ENCODE measurements at regions of chr4 and their contacts with region 1.

Region 1: GRCh38 chr4:57163530-57164459 is 53.6 kb upstream of the IGFBP7 start:
- DNase-seq: peak; percentile 95
- H3K4me3 ChIP-seq: peak overlapping the region; percentile 19 to 58 (median 49)
- H3K27ac ChIP-seq: peak overlapping the region; percentile 22
- H3K4me1 ChIP-seq: no peaks in the 10 kb centered on the region
- H3K27me3 ChIP-seq: peaks cover 15 to 20% of the 10 kb centered on the region in 2 experiments
- CTCF ChIP-seq: peak; percentile 77 to 98
- POLR2A ChIP-seq: no peak

Region 2: GRCh38 chr4:57043347-57044251 is 120.2 kb before region 1 on chr4:
- CTCF ChIA-PET with region 1: interaction called, 67 read pairs
- POLR2A ChIA-PET with region 1: no interaction called
- dilution Hi-C with region 1: no loop called
- intact Hi-C with region 1: loop called (anchors 1 kb)
- DNase-seq: peak; percentile 82
- H3K4me3 ChIP-seq: no peak overlapping the region
- H3K27ac ChIP-seq: no peak overlapping the region
- H3K4me1 ChIP-seq: peaks cover 25% of the 10 kb centered on the region
- H3K27me3 ChIP-seq: no peaks in the 10 kb centered on the region
- CTCF ChIP-seq: no peak
- POLR2A ChIP-seq: no peak

Region 3: DNA sequence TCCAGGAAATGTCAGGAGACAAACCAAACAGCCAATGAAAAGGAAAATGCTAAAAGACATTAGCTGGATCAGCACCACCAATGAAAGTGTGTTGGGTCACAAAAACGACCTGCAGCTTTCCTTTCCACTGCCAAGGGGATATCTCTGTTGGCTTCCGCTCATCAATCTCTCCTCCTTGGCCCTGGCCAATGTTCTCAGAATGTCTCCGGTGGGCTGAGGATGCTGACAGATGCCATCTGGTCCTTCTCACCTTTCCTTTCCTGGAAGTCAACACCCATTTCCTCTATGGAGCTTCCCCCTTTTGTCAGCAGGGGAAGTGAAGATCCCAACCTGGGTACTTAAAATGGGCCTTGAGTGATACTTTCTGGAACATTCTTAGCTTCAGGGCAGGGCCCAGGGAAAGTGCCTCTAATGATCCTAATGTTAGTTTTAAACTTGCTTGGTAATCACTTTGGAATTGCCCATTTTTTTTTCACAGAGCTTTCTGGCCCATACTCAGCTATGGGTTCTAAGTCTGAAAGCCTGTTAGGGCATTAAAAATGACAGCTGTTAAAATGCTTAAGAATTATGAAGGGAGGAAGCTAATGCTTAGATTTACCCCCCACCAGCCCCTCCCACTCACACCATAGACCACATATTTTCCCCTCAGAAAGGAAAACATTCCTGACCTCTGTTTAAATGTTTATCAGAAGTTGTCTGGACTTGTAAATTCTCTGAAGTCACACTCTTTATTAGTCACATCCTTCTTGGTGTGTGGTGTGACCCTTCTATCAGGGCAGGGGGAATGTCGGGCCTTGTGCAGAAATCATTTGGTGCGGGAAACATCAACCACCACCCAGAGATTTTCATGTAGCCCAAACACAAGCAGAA is 82.8 kb before region 1 on chr4:
- CTCF ChIA-PET with region 1: interaction called, 18 read pairs
- POLR2A ChIA-PET with region 1: no interaction called
- dilution Hi-C with region 1: no loop called
- intact Hi-C with region 1: loop called (anchors 1 kb)
- DNase-seq: peak; percentile 99
- H3K4me3 ChIP-seq: no peak overlapping the region
- H3K27ac ChIP-seq: peak overlapping the region; percentile 100
- H3K4me1 ChIP-seq: peaks cover 81% of the 10 kb centered on the region
- H3K27me3 ChIP-seq: no peaks in the 10 kb centered on the region
- CTCF ChIP-seq: no peak
- POLR2A ChIP-seq: peak; percentile 25

Region 4: DNA sequence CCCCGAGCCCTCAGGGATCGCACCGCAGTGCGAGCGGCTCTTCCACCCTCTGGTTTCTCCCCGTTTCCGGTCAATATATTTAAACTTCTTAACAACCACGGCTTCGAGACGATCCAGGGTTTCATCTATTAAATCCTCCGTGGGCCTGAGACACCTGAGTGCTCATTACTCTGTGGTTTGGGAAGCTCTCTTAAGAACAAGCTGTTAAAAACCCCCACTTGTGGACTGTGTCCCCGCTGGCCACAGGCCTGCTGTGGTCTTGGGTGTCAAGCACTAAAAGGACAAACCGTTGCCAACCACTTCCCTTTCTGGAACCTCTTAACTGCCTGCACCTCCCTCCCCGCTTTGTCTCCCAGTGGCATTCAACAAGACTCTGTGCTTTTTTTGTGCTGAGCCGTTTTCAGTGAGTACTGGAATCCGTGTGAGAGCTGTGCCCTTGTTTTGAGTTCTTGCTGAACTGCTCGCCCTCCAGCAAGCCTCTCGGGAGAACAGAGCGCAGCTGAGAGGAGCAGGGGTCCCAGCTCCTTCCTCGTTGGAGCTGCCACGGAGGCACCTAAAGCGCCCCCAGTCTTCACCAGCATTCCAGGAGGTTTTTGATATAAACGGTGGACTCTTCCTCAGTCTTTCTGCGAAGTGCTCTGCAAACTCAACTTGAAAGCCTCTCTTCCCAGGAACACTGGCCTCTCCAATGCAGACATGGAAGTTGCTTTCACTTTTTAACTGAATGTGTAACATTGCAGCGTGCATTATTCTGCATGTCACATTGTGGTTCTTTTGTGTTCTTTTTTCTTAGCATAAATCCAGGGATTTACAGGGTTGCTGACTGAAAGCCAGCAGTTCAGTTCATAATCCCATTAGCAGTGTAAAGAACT is 52.9 kb before region 1 on chr4:
- CTCF ChIA-PET with region 1: interaction called, 12 read pairs
- POLR2A ChIA-PET with region 1: no interaction called
- dilution Hi-C with region 1: no loop called
- intact Hi-C with region 1: loop called (anchors 1 kb)
- DNase-seq: peak; percentile 82
- H3K4me3 ChIP-seq: peak overlapping the region; percentile 20 to 85 (median 52)
- H3K27ac ChIP-seq: peak overlapping the region; percentile 54
- H3K4me1 ChIP-seq: peaks cover 21% of the 10 kb centered on the region
- H3K27me3 ChIP-seq: no peaks in the 10 kb centered on the region
- CTCF ChIP-seq: no peak
- POLR2A ChIP-seq: no peak

Region 5: GRCh38 chr4:57147335-57148060 is 16.3 kb before region 1 on chr4:
- CTCF ChIA-PET with region 1: interaction called, 31 read pairs
- POLR2A ChIA-PET with region 1: no interaction called
- dilution Hi-C with region 1: no loop called
- intact Hi-C with region 1: no loop called
- DNase-seq: peak; percentile 22
- H3K4me3 ChIP-seq: no peak overlapping the region
- H3K27ac ChIP-seq: no peak overlapping the region
- H3K4me1 ChIP-seq: no peaks in the 10 kb centered on the region
- H3K27me3 ChIP-seq: no peaks in the 10 kb centered on the region
- CTCF ChIP-seq: no peak
- POLR2A ChIP-seq: no peak

Region 6: GRCh38 chr4:57426779-57427395 is 263.1 kb after region 1 on chr4:
- CTCF ChIA-PET with region 1: interaction called, 9 read pairs
- POLR2A ChIA-PET with region 1: no interaction called
- dilution Hi-C with region 1: no loop called
- intact Hi-C with region 1: loop called (anchors 2 kb)
- DNase-seq: peak; percentile 60
- H3K4me3 ChIP-seq: no peak overlapping the region
- H3K27ac ChIP-seq: no peak overlapping the region
- H3K4me1 ChIP-seq: no peaks in the 10 kb centered on the region
- H3K27me3 ChIP-seq: no peaks in the 10 kb centered on the region
- CTCF ChIP-seq: peak; percentile 71 to 79
- POLR2A ChIP-seq: no peak